ENCODE measurements at regions of chr12 and their contacts with region 1.

Region 1: DNA sequence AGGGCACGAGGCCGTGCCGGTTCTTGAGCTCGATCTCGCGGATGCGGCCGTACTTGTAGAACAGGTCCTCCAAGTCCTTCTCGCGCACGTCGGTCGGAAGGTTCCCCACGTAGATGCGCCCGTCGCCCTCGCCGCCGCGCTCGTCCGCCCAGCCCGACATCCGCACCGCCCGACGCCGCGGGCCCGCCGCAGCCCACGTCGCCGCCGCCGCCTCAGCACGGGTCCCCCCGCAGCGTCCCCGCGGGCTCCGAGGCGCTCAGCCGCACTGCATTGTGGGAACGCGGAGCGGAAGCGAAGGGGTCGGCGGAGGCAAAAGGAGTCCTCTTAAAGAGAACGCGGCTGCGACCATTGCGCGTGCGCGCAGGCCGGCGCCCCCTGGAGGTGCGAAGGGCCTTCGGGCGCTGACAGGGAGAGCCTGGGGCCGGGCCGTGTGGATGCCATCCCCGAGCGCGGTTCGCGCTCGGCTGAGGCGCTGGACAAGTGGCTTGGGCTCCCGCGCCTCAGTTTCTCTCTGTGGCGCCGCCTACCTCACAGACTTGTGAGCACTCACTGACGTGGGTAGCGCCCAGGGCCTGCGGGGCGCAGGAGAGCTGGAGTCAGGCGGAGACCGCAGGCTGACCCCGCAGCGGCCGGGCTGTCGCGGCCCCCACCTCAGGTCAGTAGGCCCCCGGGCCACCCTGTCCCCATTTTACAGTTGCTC is at the start of gene SRSF9:
- DNase-seq: peak; percentile 99
- ATAC-seq: peak; percentile 88
- H3K4me3 Mint-ChIP-seq: peak within 1 kb of the TSS; percentile 90
- H3K27ac Mint-ChIP-seq: peak within 1 kb of the TSS; percentile 86
- H3K4me1 Mint-ChIP-seq: peaks cover 33% of the 10 kb centered on the region
- H3K27me3 Mint-ChIP-seq: no peaks in the 10 kb centered on the region
- CTCF ChIP-seq: no peak
- total RNA-seq, gene SRSF9: 191 and 192 TPM in 2 replicates

Region 2: DNA sequence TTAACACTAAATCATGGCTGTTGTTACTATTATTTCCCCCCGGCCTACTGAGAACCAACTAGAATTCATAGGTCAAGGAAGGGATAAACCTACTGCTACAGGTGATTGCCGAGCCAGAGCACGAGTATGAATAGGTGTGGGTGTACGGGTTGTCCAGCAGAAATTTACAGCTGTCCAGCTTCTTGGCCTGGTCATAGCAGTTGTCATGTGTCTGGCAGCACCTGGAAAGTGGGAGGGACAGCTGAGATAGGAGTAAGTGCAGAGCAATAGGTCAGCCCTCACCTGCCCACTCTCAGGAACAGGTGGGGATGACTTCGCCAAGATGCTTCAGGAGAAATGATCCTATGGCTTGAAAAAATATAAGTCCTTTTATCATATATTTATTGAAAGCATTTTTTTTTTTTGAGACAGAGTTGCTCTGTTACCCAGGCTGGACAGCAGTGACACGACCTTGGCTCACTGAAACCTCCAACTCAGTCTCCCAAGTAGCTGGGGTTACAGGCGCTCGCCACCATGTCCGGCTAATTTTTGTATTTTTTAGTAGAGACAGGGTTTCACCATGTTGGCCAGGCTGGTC is 144.7 kb before region 1 on chr12:
- CTCF ChIA-PET with region 1: no interaction called
- POLR2A ChIA-PET with region 1: interaction called, 8 read pairs
- intact Hi-C with region 1: loop called (anchors 1 kb)
- DNase-seq: no peak
- ATAC-seq: no peak
- H3K4me3 Mint-ChIP-seq: peak overlapping the region; percentile 83
- H3K27ac Mint-ChIP-seq: no peak overlapping the region
- H3K4me1 Mint-ChIP-seq: peaks cover 7% of the 10 kb centered on the region
- H3K27me3 Mint-ChIP-seq: peaks cover 9% of the 10 kb centered on the region
- CTCF ChIP-seq: no peak

Region 3: GRCh38 chr12:120437754-120438494 is 31.7 kb before region 1 on chr12 and contains the start of gene COX6A1:
- CTCF ChIA-PET with region 1: interaction called, 8 read pairs
- POLR2A ChIA-PET with region 1: interaction called, 21 read pairs
- intact Hi-C with region 1: loop called (anchors 1 kb)
- DNase-seq: peak; percentile 87
- ATAC-seq: peak; percentile 96
- H3K4me3 Mint-ChIP-seq: peak within 1 kb of the TSS; percentile 97
- H3K27ac Mint-ChIP-seq: peak within 1 kb of the TSS; percentile 89
- H3K4me1 Mint-ChIP-seq: peaks cover 29% of the 10 kb centered on the region
- H3K27me3 Mint-ChIP-seq: peaks cover 4% of the 10 kb centered on the region
- CTCF ChIP-seq: no peak
- total RNA-seq, gene COX6A1: 255 and 292 TPM in 2 replicates

Region 4: DNA sequence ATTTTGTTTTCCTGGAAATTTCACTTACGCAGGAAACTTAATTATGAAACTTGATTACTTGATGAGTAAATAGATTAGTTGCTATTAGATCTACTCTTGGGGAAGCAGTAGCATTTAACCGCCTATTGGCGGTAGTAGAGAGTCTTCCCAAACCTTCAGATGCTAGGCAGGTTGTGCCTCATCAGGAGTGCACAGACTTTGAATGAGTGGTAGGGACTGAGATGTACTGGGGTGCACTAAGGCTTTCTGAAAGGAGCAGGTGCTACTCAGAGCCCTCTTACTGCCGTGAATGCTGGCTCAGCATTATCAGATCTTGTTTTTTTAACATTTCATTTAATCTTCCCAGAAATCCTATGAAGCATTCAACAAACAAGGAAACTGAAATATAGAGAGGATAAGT is 15.6 kb before region 1 on chr12:
- CTCF ChIA-PET with region 1: interaction called, 8 read pairs
- POLR2A ChIA-PET with region 1: interaction called, 9 read pairs
- intact Hi-C with region 1: loop called (anchors 2 kb)
- DNase-seq: no peak
- ATAC-seq: peak; percentile 87
- H3K4me3 Mint-ChIP-seq: no peak overlapping the region
- H3K27ac Mint-ChIP-seq: no peak overlapping the region
- H3K4me1 Mint-ChIP-seq: peaks cover 10% of the 10 kb centered on the region
- H3K27me3 Mint-ChIP-seq: no peaks in the 10 kb centered on the region
- CTCF ChIP-seq: no peak

Region 5: DNA sequence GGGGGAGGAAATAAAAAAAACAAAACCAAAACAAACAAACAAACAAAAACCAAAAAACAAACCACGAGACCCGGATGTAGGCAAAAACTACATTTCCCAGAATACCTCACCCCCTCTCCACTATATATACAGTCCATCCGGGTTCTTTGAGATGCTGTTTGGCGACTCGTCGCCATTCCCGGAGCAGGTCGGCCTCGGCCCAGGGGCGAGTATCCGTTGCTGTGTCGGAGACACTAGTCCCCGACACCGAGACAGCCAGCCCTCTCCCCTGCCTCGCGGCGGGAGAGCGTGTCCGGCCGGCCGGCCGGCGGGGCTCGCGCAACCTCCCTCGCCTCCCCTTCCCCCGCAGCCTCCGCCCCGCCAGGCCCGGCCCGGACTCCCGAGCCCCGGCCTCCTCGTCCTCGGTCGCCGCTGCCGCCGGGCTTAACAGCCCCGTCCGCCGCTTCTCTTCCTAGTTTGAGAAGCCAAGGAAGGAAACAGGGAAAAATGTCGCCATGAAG is 64.7 kb after region 1 on chr12 and contains the start of gene RNF10:
- CTCF ChIA-PET with region 1: interaction called, 4 read pairs
- POLR2A ChIA-PET with region 1: interaction called, 13 read pairs
- intact Hi-C with region 1: loop called (anchors 1 kb)
- DNase-seq: peak; percentile 66
- ATAC-seq: peak; percentile 68
- H3K4me3 Mint-ChIP-seq: peak within 1 kb of the TSS; percentile 93
- H3K27ac Mint-ChIP-seq: peak within 1 kb of the TSS; percentile 91
- H3K4me1 Mint-ChIP-seq: peaks cover 60% of the 10 kb centered on the region
- H3K27me3 Mint-ChIP-seq: no peaks in the 10 kb centered on the region
- CTCF ChIP-seq: no peak
- total RNA-seq, gene RNF10: 180 and 200 TPM in 2 replicates